ENCODE measurements at regions of chr19 and their contacts with region 1.

Region 1: DNA sequence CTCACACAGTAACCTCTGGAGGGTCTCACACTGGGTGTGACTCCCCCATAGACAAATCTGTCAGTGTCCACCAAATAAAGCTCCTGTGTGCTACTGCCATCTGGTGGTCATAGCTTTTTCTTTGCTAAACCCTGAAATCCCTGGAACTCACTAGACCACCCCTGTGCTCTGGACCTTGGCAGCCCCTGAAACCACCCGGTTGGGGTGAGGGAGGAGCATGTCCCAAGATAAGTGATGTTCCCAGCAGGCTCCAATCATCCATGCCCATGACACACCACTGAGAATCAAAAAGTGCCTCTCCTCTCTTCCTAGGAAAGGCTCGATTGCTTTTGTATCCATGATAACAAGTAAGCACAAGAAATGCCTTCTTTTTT is 6.5 kb upstream of the HSD17B14 start:
- DNase-seq: no peak
- H3K4me3 ChIP-seq: no peak overlapping the region
- H3K27ac ChIP-seq: no peak overlapping the region
- H3K27me3 ChIP-seq: no peaks in the 10 kb centered on the region
- CTCF ChIP-seq: peak; percentile 80

Region 2: GRCh38 chr19:48646001-48646721 is 196.6 kb before region 1 on chr19 and contains the start of gene CA11:
- CTCF ChIA-PET with region 1: interaction called, 19 read pairs
- POLR2A ChIA-PET with region 1: interaction called, 10 read pairs
- DNase-seq: no peak
- H3K4me3 ChIP-seq: peak within 1 kb of the TSS; percentile 60
- H3K27ac ChIP-seq: peak within 1 kb of the TSS; percentile 21
- H3K27me3 ChIP-seq: peaks cover 2% of the 10 kb centered on the region
- CTCF ChIP-seq: peak; percentile 84
- polyA plus RNA-seq, gene CA11: 3.7 and 4.3 TPM in 2 replicates

Region 3: DNA sequence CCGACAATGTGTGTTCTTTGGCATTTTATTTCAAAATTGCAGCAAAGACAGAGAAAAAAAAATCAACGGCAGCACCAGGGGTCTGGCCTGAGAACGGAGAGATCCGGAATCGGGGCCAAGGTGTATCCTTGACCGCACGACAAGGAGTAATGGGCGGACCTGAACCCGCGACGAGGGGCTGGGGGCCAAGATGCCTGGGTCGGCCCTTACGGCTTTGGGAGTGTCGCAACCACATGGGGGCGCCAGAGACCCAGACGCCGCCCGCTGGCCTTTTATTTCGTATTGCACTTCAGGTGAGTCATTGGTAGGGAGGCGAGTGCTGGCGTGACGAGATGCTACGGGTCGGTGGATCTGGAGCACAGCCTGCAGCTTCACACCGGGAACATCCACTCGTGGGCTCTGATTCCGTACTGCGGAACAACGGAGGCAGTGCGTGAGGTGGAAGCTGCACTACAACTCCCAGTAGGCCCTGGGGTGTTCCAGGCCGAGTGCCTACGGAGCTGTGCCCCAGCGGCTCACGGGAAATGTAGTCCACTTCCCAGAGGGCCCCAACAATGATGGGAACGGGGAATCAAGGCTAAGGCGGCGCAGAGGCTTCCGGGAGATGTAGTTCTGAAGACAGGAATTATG is 47.6 kb before region 1 on chr19:
- CTCF ChIA-PET with region 1: interaction called, 201 read pairs
- POLR2A ChIA-PET with region 1: interaction called, 5 read pairs
- DNase-seq: peak; percentile 84
- H3K4me3 ChIP-seq: peak overlapping the region; percentile 63
- H3K27ac ChIP-seq: peak overlapping the region; percentile 87
- H3K27me3 ChIP-seq: no peaks in the 10 kb centered on the region
- CTCF ChIP-seq: peak; percentile 95

Region 4: GRCh38 chr19:48853483-48853882 is 10.7 kb after region 1 on chr19:
- CTCF ChIA-PET with region 1: interaction called, 17 read pairs
- POLR2A ChIA-PET with region 1: no interaction called
- DNase-seq: no peak
- H3K4me3 ChIP-seq: no peak overlapping the region
- H3K27ac ChIP-seq: no peak overlapping the region
- H3K27me3 ChIP-seq: no peaks in the 10 kb centered on the region
- CTCF ChIP-seq: no peak

Region 5: DNA sequence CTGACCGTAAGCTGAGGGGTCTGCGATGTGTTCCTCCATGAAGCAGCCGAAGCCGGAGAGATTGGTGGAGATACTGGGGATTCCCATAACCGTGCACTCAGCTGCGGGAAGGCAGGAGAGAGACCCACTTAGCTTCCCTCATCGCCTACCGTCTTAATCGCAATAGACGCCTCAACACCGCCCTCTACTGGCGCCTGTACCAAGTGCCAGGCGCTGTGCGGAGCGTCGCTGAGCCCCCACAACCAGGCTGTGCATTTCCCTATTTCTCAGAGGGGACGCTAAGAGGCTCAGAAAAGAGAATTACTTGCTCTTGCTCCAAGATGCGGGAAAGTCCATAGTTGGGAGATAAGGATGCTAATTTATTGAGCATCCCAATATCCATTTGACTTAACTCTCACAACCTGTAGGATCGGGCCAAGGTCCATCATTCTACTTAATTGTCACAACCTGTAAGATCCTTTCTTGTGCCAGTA is 128.2 kb after region 1 on chr19:
- CTCF ChIA-PET with region 1: interaction called, 21 read pairs
- POLR2A ChIA-PET with region 1: interaction called, 8 read pairs
- DNase-seq: no peak
- H3K4me3 ChIP-seq: no peak overlapping the region
- H3K27ac ChIP-seq: no peak overlapping the region
- H3K27me3 ChIP-seq: no peaks in the 10 kb centered on the region
- CTCF ChIP-seq: peak; percentile 94

Region 6: DNA sequence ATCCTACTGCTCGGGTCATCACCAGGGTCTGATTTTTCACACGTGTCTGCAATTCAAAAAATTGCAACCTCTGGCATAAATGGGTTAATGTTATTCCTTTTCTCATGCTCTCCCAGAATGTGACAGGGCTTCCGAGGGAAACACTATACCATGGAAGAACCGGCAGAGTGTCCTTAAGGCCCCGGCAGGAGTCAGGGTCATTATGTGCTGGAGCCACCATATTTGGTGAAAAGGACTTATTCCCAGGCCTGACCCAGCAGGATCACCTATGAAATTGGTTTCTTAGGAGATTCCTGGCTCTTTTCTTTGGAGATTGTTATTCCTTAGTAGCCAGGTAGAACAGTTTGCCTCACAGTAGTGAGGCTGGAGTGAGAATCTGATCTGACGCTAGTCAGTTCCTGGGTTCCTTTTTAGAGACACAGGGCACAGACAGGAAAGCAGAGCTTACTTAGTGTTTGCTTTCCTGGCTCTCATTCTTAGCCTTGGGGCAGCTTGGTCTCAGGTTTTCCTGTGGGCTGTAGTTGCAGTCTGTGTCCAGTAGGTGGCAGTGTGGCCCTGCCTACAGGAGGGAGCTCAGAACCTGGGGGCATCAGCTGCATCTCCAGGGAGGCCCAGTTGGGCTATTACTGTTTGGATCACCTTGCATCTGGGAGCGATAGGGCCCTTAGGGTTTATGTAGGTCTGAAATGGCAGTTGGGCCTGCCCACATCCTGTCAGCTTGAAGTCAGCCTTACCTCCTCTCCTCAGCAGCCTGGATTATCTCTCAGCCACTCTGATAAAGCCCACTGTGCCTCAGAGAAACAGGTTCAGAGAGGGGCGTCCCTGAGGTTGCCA is 254.9 kb after region 1 on chr19:
- CTCF ChIA-PET with region 1: no interaction called
- POLR2A ChIA-PET with region 1: no interaction called
- DNase-seq: peak; percentile 53
- H3K4me3 ChIP-seq: no peak overlapping the region
- H3K27ac ChIP-seq: no peak overlapping the region
- H3K27me3 ChIP-seq: no peaks in the 10 kb centered on the region
- CTCF ChIP-seq: peak; percentile 99

Measured in AG04450 (cell line).